Dorsolateral prefrontal cortex (tissue), 120 donors: ENCODE measurements at regions of chr6 and their contacts with region 1.

Region 1: DNA sequence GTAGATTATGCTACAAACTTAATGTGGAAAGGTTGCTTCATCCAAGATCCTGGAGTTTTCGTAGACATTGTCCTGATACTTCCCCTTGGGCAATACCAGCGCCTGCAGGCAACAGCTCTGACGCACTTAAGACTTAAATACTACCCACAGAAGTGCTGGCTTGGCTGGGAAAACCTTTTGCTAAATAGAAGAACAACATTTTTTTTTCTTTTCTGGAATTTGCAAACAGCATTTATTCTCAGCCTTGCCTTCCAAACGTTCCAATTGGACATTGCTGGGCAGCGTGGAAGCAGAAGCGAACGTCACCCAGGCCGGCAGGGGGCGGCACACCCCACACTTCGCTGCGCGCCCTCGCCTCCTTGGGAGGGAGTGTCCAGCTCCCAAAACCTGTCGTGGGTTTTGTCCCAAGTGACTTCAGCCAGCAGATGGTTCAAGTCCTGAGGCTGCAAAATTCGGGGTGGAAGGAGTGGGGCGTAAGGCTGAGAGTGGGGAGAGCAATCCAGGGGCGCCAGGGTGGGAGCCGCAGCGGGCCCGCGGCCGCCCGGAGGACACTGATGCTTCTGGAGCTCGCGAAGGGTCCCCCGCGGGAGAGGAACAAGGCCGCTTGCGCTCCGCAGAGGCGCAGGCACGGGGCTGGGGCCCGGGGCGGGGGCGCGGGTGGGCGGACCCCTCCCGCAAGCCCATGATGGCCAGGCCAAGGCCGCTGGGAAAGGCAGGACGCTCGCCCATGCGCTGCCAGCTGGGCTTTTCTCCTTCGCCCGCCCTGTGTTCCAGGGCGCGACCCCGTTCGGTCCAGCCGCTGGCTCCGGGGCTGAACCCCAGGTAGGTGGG is 60.8 kb upstream of the MAP3K4 start:
- DNase-seq: peak; percentile 61 to 88 (median 80)
- H3K4me3 ChIP-seq: peak overlapping the region; percentile 47 to 78 (median 65)
- H3K27ac ChIP-seq: peak overlapping the region in 46 of 59 donors; percentile 8 to 85 (median 66)
- H3K27me3 ChIP-seq: no peaks in the 10 kb centered on the region
- CTCF ChIP-seq: peak; percentile 58 to 97 (median 91)

Region 2: DNA sequence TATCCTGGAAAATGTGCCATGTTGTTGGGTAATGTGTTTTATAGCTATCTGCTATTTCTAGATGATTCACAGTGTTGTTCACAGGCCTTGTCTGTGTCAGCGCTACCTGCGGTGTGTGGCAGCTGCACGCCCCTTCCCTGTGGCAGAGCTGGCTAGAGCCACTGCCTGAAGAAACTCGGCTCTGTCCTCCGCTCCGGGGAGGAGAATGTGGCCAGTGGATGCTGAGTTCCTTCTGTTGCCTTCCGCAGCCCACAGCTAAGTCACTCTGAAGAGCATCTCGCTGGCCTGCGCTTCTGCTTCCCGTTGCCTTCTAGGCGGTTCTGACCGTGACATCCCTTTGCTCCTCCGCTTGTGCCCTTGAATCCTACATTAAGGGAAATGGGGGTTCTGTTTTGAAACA is 93.6 kb before region 1 on chr6:
- intact Hi-C with region 1: no loop called
- DNase-seq: peak in 8 of 10 donors; percentile 18 to 59 (median 38)
- H3K4me3 ChIP-seq: no peak overlapping the region
- H3K27ac ChIP-seq: no peak overlapping the region
- H3K27me3 ChIP-seq: no peaks in the 10 kb centered on the region
- CTCF ChIP-seq: no peak

Region 3: DNA sequence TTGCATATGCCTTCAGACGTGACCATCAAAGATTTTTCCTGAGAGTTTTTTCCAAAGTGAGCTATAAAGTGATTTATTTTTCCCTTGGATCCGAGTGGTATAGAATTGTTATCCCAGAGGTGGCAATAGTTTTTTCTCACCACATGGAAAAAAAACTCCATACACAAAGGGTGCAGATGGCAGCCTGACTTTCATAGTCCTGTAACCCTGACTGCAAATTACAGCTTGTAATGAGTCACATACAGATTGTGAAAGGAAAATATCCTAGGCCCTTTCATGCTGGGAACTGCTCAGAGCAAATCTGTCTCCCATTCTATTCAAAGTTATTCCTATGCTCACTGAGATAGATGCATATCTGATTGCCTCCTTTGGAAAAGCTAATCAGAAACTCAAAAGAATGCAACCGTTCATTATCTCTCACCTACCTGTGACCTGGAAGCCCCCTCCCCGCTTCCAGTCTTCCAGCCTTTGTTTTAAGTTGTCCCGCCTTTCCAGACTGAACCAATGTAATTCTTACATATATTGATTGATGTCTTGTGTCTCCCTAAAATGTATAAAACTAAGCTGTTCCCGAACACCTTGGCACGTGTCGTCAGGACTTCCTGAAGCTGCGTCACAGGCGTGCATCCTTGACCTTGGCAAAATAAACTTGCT is 47.9 kb before region 1 on chr6:
- intact Hi-C with region 1: no loop called
- DNase-seq: no peak
- H3K4me3 ChIP-seq: no peak overlapping the region
- H3K27ac ChIP-seq: no peak overlapping the region
- H3K27me3 ChIP-seq: no peaks in the 10 kb centered on the region
- CTCF ChIP-seq: no peak

Region 4: GRCh38 chr6:160992061-160992979 is 61.6 kb after region 1 on chr6:
- intact Hi-C with region 1: loop called (anchors 2 kb)
- DNase-seq: peak in 9 of 10 donors; percentile 29 to 61 (median 46)
- H3K4me3 ChIP-seq: peak overlapping the region; percentile 57 to 98 (median 92)
- H3K27ac ChIP-seq: peak overlapping the region; percentile 73 to 98 (median 93)
- H3K27me3 ChIP-seq: no peaks in the 10 kb centered on the region
- CTCF ChIP-seq: peak in 54 of 56 donors; percentile 26 to 72 (median 56)

Region 5: DNA sequence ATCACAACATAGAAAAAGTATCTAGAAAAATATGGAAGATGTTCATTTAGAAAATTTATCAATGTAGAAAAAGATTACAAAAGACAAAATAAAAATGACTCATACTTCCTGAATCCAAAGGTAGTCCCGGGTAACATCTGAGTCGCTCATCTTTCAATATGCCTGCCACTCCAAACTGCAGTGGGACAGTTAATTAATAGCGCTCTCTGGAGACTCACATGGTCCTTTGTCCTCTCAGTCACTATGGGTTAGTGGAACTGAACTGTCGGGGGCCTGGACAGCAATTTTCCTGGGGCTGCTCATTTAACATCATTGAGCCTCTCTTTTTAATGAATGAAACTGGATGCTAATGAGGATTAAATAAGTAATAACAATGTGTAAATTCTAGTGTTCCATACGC is 164.2 kb after region 1 on chr6:
- intact Hi-C with region 1: loop called in 1 of 2 experiments (anchors 5 kb)
- DNase-seq: no peak
- H3K4me3 ChIP-seq: no peak overlapping the region
- H3K27ac ChIP-seq: no peak overlapping the region
- H3K27me3 ChIP-seq: no peaks in the 10 kb centered on the region
- CTCF ChIP-seq: no peak